CD4-positive, alpha-beta memory T cell (primary cell): ENCODE measurements at regions of chr2 and their contacts with region 1.

Region 1: GRCh38 chr2:214809751-214810564 is 475 bp upstream of the BARD1 start:
- DNase-seq: peak; percentile 91 to 94 (median 92)
- H3K4me3 ChIP-seq: peak overlapping the region; percentile 61 to 89
- H3K4me3 Mint-ChIP-seq: peak overlapping the region; percentile 90 to 99 (median 98)
- H3K27ac ChIP-seq: peak overlapping the region; percentile 60
- H3K27ac Mint-ChIP-seq: peak overlapping the region; percentile 65 to 91 (median 82)
- H3K4me1 ChIP-seq: peaks cover 32% of the 10 kb centered on the region
- H3K4me1 Mint-ChIP-seq: peaks cover 22 to 45% (median 30%) of the 10 kb centered on the region in 4 donors
- H3K27me3 ChIP-seq: no peaks in the 10 kb centered on the region
- H3K27me3 Mint-ChIP-seq: no peaks in the 10 kb centered on the region

Region 2: GRCh38 chr2:213151437-213152064 is 1658.4 kb before region 1 on chr2 and contains the start of gene IKZF2:
- CTCF ChIA-PET with region 1: no interaction called
- POLR2A ChIA-PET with region 1: interaction called, 4 read pairs
- intact Hi-C with region 1: loop called (anchors 5 kb)
- DNase-seq: peak; percentile 72 to 78 (median 72)
- H3K4me3 ChIP-seq: peak within 1 kb of the TSS; percentile 64 to 68
- H3K4me3 Mint-ChIP-seq: peak within 1 kb of the TSS; percentile 90 to 96 (median 94)
- H3K27ac ChIP-seq: peak within 1 kb of the TSS; percentile 50
- H3K27ac Mint-ChIP-seq: peak within 1 kb of the TSS; percentile 65 to 92 (median 88)
- H3K4me1 ChIP-seq: peaks cover 7% of the 10 kb centered on the region
- H3K4me1 Mint-ChIP-seq: peaks cover 14 to 39% (median 23%) of the 10 kb centered on the region in 4 donors
- H3K27me3 ChIP-seq: no peaks in the 10 kb centered on the region
- H3K27me3 Mint-ChIP-seq: peaks cover 12 to 22% of the 10 kb centered on the region in 2 donors
- total RNA-seq, gene IKZF2: 13.2 to 15.0 TPM

Region 3: GRCh38 chr2:213284105-213285090 is 1525.6 kb before region 1 on chr2 and contains the start of gene SPAG16:
- CTCF ChIA-PET with region 1: interaction called, 3 read pairs
- POLR2A ChIA-PET with region 1: interaction called, 5 read pairs
- intact Hi-C with region 1: loop called (anchors 1 kb)
- DNase-seq: peak; percentile 95 to 97 (median 96)
- H3K4me3 ChIP-seq: peak within 1 kb of the TSS; percentile 72 to 87
- H3K4me3 Mint-ChIP-seq: peak within 1 kb of the TSS; percentile 92 to 98 (median 96)
- H3K27ac ChIP-seq: peak within 1 kb of the TSS; percentile 60
- H3K27ac Mint-ChIP-seq: peak within 1 kb of the TSS; percentile 87 to 98 (median 96)
- H3K4me1 ChIP-seq: peaks cover 23% of the 10 kb centered on the region
- H3K4me1 Mint-ChIP-seq: peaks cover 22 to 46% (median 33%) of the 10 kb centered on the region in 4 donors
- H3K27me3 ChIP-seq: no peaks in the 10 kb centered on the region
- H3K27me3 Mint-ChIP-seq: no peaks in the 10 kb centered on the region
- total RNA-seq, gene SPAG16: 6.3 to 7.9 TPM

Region 4: GRCh38 chr2:214679736-214680135 is 130.2 kb before region 1 on chr2:
- CTCF ChIA-PET with region 1: no interaction called
- POLR2A ChIA-PET with region 1: interaction called, 5 read pairs
- intact Hi-C with region 1: loop called (anchors 2 kb)
- DNase-seq: no peak
- H3K4me3 ChIP-seq: no peak overlapping the region
- H3K4me3 Mint-ChIP-seq: peak overlapping the region in 6 of 8 donors; percentile 6 to 64 (median 28)
- H3K27ac ChIP-seq: no peak overlapping the region
- H3K27ac Mint-ChIP-seq: peak overlapping the region in 1 of 7 donors; percentile 86
- H3K4me1 ChIP-seq: peaks cover 7% of the 10 kb centered on the region
- H3K4me1 Mint-ChIP-seq: peaks cover 7 to 19% (median 12%) of the 10 kb centered on the region in 4 donors
- H3K27me3 ChIP-seq: no peaks in the 10 kb centered on the region
- H3K27me3 Mint-ChIP-seq: no peaks in the 10 kb centered on the region

Region 5: GRCh38 chr2:215311625-215312396 is 501.9 kb after region 1 on chr2 and contains the start of gene ATIC:
- CTCF ChIA-PET with region 1: interaction called, 4 read pairs
- POLR2A ChIA-PET with region 1: interaction called, 3 read pairs
- intact Hi-C with region 1: loop called (anchors 1 kb)
- DNase-seq: peak; percentile 84 to 90 (median 87)
- H3K4me3 ChIP-seq: peak within 1 kb of the TSS; percentile 63 to 93
- H3K4me3 Mint-ChIP-seq: peak within 1 kb of the TSS; percentile 93 to 98 (median 96)
- H3K27ac ChIP-seq: peak within 1 kb of the TSS; percentile 75
- H3K27ac Mint-ChIP-seq: peak within 1 kb of the TSS; percentile 89 to 97 (median 94)
- H3K4me1 ChIP-seq: peaks cover 25% of the 10 kb centered on the region
- H3K4me1 Mint-ChIP-seq: peaks cover 28 to 44% (median 39%) of the 10 kb centered on the region in 4 donors
- H3K27me3 ChIP-seq: no peaks in the 10 kb centered on the region
- H3K27me3 Mint-ChIP-seq: no peaks in the 10 kb centered on the region
- total RNA-seq, gene ATIC: 85.1 to 87.1 TPM

Region 6: GRCh38 chr2:216013080-216013909 is 1203.3 kb after region 1 on chr2 and contains the start of gene MREG:
- CTCF ChIA-PET with region 1: no interaction called
- POLR2A ChIA-PET with region 1: no interaction called
- intact Hi-C with region 1: loop called (anchors 5 kb)
- DNase-seq: peak; percentile 79 to 85 (median 82)
- H3K4me3 ChIP-seq: peak within 1 kb of the TSS in 1 of 2 donors; percentile 63
- H3K4me3 Mint-ChIP-seq: peak within 1 kb of the TSS; percentile 89 to 93 (median 90)
- H3K27ac ChIP-seq: no peak within 1 kb of the TSS
- H3K27ac Mint-ChIP-seq: peak within 1 kb of the TSS; percentile 54 to 89 (median 80)
- H3K4me1 ChIP-seq: peaks cover 47% of the 10 kb centered on the region
- H3K4me1 Mint-ChIP-seq: peaks cover 39 to 61% (median 46%) of the 10 kb centered on the region in 4 donors
- H3K27me3 ChIP-seq: no peaks in the 10 kb centered on the region
- H3K27me3 Mint-ChIP-seq: no peaks in the 10 kb centered on the region
- total RNA-seq, gene MREG: 7.4 TPM